ENCODE measurements at regions of chr3 and their contacts with region 1.

Region 1: GRCh38 chr3:116770815-116771450 is 61.4 kb downstream of the TUSC7 start:
- DNase-seq: peak; percentile 42 to 67 (median 56)
- H3K4me3 ChIP-seq: no peak overlapping the region
- H3K4me3 Mint-ChIP-seq: no peak overlapping the region
- H3K27ac ChIP-seq: no peak overlapping the region
- H3K27ac Mint-ChIP-seq: no peak overlapping the region
- H3K4me1 ChIP-seq: no peaks in the 10 kb centered on the region
- H3K4me1 Mint-ChIP-seq: peaks cover 2% of the 10 kb centered on the region
- H3K27me3 ChIP-seq: no peaks in the 10 kb centered on the region
- H3K27me3 Mint-ChIP-seq: peaks cover 0 to 2% (median 1%) of the 10 kb centered on the region in 3 donors
- CTCF ChIP-seq: peak; percentile 91

Region 2: GRCh38 chr3:117526470-117527079 is 755.6 kb after region 1 on chr3:
- intact Hi-C with region 1: loop called (anchors 5 kb)
- DNase-seq: peak; percentile 13 to 32 (median 23)
- H3K4me3 ChIP-seq: no peak overlapping the region
- H3K4me3 Mint-ChIP-seq: no peak overlapping the region
- H3K27ac ChIP-seq: no peak overlapping the region
- H3K27ac Mint-ChIP-seq: no peak overlapping the region
- H3K4me1 ChIP-seq: no peaks in the 10 kb centered on the region
- H3K4me1 Mint-ChIP-seq: no peaks in the 10 kb centered on the region
- H3K27me3 ChIP-seq: peaks cover 0 to 6% of the 10 kb centered on the region in 2 donors
- H3K27me3 Mint-ChIP-seq: peaks cover 0 to 2% (median 0%) of the 10 kb centered on the region in 3 donors
- CTCF ChIP-seq: peak; percentile 73

Region 3: GRCh38 chr3:117997201-117998049 is 1226.5 kb after region 1 on chr3:
- intact Hi-C with region 1: loop called in 1 of 2 experiments (anchors 10 kb)
- DNase-seq: peak; percentile 12 to 37 (median 29)
- H3K4me3 ChIP-seq: no peak overlapping the region
- H3K4me3 Mint-ChIP-seq: no peak overlapping the region
- H3K27ac ChIP-seq: no peak overlapping the region
- H3K27ac Mint-ChIP-seq: no peak overlapping the region
- H3K4me1 ChIP-seq: peaks cover 7 to 8% of the 10 kb centered on the region in 2 donors
- H3K4me1 Mint-ChIP-seq: no peaks in the 10 kb centered on the region
- H3K27me3 ChIP-seq: peaks cover 7 to 35% of the 10 kb centered on the region in 2 donors
- H3K27me3 Mint-ChIP-seq: peaks cover 0 to 6% (median 5%) of the 10 kb centered on the region in 3 donors
- CTCF ChIP-seq: peak; percentile 81